ENCODE measurements at regions of chr15 and their contacts with region 1.

Region 1: DNA sequence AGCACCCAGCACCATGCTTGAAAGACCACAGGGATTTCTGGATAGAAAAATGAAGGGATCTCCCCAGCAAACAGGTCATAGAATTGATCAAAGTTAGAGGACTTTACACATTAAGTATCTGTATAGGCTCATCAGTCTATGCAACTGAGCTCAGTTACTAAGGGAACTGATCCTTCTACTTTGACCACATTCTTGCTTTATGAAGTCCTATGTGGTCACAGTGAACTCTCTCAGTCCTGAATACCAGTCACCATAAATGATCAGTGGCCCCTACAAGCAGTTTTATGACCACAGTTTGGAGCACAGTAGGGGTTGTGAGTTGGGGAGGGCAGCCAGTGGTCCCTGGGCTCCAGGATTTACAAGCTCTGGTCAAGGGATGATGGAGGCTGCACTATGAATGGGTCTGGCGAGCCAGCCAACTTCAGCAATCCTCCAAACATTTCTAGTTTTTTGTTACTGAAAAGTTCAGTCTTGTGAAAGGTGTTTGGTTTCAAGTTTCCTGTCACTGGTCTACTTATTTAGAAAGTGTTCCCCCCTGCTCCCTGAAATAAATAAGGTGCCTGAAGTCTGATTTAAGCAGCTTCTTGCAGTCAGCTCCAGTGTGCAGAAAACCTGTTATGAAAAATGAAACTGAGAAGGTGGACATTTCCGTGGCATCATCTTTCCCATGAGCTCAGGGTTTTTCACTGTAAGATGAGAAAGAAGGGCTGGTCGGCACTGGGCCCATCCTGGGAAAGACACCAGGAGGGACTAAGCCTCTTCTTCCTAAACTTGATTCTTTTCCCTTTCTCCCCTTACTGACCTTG is 75.5 kb downstream of the DAPK2 start:
- DNase-seq: no peak
- ATAC-seq: no peak

Region 2: DNA sequence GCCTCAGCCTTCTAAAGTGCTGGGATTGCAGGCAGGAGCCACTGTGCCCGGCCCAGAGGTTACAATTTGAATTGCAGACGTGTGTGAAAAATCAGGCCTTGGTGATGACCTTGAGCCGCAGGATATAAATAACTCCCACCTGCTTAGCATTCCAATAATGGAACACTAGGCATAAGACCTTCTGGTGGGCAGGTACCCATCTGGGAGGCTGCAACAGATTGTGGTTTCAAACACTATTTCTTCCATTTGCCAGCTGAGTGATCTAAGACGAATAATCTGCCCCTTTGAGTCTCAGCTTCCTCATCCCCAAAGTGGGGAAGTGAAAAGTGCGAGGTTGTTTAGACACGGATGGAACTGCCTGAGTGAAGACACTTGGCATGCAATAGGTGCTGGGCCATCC is 89.4 kb before region 1 on chr15:
- intact Hi-C with region 1: no loop called
- DNase-seq: no peak
- ATAC-seq: no peak

Region 3: GRCh38 chr15:64032329-64032728 is 61.5 kb after region 1 on chr15:
- intact Hi-C with region 1: no loop called
- DNase-seq: no peak
- ATAC-seq: peak; percentile 64

Region 4: DNA sequence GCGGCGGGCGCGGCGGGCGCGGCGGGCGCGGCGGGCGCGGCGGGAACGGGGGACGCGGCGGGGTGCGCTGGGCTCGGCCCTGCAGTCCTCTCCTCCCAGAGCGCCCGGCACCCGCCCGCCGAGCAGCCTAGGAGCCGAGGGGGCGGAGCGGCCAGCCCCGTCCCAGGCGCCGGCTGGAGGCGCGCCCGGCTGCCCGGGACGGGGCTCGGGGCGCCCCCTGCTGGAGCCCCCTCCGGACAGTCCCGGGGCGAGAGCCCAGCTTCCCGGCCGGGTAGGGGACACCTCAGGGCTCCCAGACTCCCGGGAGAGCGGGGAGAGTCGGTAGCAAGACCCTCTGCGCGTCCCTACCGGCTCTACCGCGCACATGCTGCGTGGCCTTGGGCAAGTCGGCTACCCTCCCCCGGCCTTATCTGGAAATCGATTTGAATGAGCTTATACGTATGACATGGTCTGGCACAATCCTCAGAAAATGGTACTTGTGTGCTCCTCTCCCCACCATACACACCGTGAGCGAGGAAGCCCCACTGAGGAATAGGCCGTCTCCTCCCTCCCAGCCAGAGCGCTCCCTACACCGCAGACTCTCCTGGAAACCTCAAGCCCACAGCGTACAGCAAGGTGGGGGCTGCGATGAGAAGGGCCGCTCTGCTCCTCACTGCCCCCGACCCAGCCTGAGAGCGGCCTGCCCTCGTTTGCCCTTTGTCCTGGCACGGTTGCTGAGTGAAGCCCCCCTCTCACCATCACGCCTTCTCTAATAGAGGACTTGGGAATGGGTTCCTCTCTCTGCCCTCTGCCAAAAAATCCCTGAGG is 75.7 kb after region 1 on chr15 and contains the start of gene DAPK2:
- intact Hi-C with region 1: loop called (anchors 10 kb)
- DNase-seq: peak; percentile 92
- ATAC-seq: peak; percentile 80
- total RNA-seq, gene DAPK2: 43.4 TPM

Measured in left ventricle myocardium superior (tissue), 1 donor.